Endothelial cell of umbilical vein (primary cell): ENCODE measurements at regions of chr22 and their contacts with region 1.

Region 1: DNA sequence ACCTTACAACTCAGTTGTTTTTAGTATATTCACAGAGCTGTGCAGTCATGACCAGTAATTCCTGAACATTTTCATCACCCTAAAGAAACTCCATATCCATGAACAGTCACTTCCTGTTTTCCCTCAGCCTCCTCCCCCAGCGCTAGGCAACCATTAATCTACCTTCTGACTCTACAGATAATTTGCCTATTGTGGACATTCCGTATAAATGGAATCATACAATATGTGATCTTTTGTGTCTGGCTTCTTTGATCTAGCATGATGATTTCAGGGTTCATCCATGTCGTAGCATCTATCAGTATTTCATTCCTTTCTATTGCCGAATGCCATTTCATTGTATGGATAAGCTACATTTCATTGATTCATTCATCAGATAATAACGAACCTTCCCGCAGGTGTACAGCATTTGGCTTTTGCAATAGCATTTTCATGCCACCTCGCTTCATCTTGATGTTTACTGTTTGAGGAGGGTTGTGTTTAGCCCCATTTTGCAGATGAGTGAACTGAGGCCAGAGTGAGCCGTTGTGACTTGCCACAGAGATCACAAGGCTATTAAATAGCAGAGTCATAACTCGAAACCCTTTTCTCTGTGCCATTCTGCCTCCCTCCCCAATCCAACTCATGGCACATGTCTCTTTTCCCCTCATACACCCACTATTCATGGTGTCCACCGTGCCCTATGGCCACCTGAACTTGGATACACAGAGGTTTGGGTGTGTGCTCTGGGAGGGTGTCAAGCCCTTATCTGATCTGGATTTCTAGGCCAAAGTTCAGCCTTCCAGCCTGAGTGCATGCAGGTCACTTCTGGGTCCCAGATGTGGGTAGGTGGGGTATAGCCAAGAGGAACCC is 11.1 kb upstream of the MYH9 start:
- DNase-seq: peak; percentile 86
- H3K4me3 ChIP-seq: no peak overlapping the region
- H3K27ac ChIP-seq: peak overlapping the region; percentile 81
- H3K4me1 ChIP-seq: peaks cover 27% of the 10 kb centered on the region
- H3K27me3 ChIP-seq: no peaks in the 10 kb centered on the region
- CTCF ChIP-seq: no peak
- POLR2A ChIP-seq: no peak

Region 2: DNA sequence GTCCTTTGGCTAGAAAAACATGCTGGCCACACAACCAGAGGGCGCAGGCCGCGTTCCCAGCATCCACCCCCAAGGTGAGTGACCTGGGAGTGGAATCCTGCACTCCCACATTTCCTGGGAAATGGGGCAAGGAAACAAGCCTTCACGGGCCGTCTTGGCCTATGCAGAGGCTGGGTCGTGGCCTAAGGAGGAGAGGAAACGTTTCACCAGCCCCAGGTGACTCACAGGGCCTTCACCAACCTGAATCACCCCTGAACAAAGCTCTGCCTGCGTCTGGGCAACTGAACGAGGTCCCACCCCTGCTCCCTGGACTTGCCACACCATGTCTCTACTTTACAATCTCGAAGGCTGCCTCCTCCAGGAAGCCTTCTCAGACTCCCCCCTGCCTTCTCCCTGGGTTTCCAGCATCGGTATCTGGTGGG is 24.2 kb before region 1 on chr22:
- CTCF ChIA-PET with region 1: no interaction called
- POLR2A ChIA-PET with region 1: no interaction called
- dilution Hi-C with region 1: no loop called
- intact Hi-C with region 1: no loop called
- DNase-seq: peak; percentile 72
- H3K4me3 ChIP-seq: no peak overlapping the region
- H3K27ac ChIP-seq: peak overlapping the region; percentile 68
- H3K4me1 ChIP-seq: peaks cover 94% of the 10 kb centered on the region
- H3K27me3 ChIP-seq: no peaks in the 10 kb centered on the region
- CTCF ChIP-seq: no peak
- POLR2A ChIP-seq: no peak

Region 3: GRCh38 chr22:36454916-36455570 is 56.2 kb after region 1 on chr22:
- CTCF ChIA-PET with region 1: no interaction called
- POLR2A ChIA-PET with region 1: no interaction called
- dilution Hi-C with region 1: no loop called
- intact Hi-C with region 1: loop called (anchors 1 kb)
- DNase-seq: peak; percentile 92
- H3K4me3 ChIP-seq: peak overlapping the region; percentile 20 to 50 (median 47)
- H3K27ac ChIP-seq: peak overlapping the region; percentile 72
- H3K4me1 ChIP-seq: peaks cover 24% of the 10 kb centered on the region
- H3K27me3 ChIP-seq: no peaks in the 10 kb centered on the region
- CTCF ChIP-seq: peak in 1 of 2 donors; percentile 8
- POLR2A ChIP-seq: peak; percentile 32